ENCODE measurements at regions of chr1 and their contacts with region 1.

Region 1: DNA sequence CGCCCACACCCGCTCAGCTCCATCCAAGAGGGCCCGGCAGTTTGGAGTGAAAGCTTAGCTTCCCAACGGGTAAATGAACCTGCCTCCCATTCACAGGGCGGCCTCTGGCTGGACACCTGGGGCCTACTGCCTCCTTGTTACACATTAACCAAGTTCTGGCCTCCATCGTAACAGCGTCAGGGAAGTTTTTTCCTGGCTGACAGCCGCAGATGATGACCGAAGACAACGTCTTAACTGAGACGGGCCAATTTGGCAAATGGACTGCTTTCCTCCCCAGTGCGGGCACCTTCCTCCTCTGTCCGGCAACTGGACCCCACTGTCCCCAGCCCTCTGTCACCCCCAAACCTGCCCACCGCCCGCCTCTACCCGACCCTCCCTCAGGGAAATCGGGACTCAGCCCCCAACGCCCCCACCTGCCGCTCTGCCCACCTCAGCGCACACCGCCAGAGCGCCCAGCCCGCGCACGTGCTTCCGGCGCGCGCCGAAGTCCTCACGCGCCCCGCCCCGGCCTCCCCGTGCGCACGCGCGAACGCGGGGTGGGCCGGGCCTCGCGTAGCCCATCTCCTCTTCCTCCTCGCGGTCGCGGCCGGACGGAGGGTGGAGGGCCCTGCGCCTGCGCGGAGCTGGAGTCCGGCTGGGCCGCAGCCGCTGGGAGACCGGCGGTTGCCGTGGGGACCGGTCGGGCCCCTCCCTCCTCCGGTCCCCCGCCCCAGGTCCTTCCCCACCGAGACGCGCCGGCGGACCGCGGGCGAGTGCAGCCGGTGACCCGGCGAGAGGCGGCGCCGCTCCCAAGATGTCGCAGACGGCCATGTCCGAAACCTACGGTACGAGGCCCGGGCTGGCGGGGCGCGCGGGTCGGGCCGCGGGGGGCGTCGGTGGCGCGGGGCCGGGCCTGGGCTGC is at the start of gene RAB4A:
- DNase-seq: peak; percentile 38 to 90 (median 70)
- ATAC-seq: peak; percentile 87
- H3K4me3 ChIP-seq: peak within 1 kb of the TSS; percentile 80
- H3K4me3 Mint-ChIP-seq: peak within 1 kb of the TSS; percentile 99
- H3K27ac ChIP-seq: peak within 1 kb of the TSS in 1 of 2 donors; percentile 41
- H3K27ac Mint-ChIP-seq: peak within 1 kb of the TSS; percentile 77
- H3K4me1 ChIP-seq: peaks cover 34% of the 10 kb centered on the region
- H3K4me1 Mint-ChIP-seq: peaks cover 35% of the 10 kb centered on the region
- H3K27me3 ChIP-seq: no peaks in the 10 kb centered on the region
- H3K27me3 Mint-ChIP-seq: no peaks in the 10 kb centered on the region
- CTCF ChIP-seq: no peak
- total RNA-seq, gene RAB4A: 26.7 to 28.7 TPM

Region 2: DNA sequence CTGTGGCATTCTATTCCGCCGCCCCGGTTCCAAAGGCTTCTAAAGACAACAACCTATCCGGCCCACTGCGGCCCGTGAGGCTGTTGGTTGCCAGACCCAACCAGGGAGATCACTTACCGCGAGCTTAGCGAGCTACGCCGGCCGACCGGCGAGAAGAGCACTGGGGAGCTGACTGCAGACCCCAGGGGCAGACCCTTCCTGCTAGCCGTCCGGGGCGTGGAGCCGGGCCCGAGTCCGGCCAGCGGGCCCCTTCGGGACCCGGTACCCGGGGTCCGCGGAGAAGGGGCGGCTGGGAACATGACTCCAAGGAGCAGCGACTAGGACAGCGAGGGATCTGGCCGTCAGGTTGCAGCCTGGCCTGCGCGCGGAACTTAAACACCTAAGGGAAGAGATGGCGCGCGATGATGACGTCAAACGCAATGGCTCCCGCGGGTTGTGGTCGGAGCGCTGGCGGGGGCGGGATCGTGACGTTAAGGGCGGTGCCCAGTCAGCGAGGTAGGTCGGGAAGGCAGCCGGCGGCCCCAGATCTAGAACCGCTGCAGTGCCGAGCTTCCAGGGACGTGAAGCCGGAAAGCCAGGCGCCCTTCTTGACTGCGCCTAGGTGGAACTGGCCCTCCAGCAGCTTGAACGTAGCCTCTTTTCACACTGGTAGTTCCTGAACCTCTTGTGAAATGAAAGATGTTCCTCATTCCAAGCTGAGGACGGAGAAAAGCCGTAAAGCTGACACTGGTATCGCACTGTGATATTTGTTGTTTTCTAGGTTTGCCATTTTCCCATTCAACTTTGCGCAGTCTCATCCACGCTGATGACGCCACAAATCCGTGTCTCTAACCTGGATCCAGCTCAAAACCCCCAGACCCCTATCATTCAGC is 237.4 kb after region 1 on chr1 and contains the start of gene NUP133:
- CTCF ChIA-PET with region 1: interaction called, 4 read pairs
- POLR2A ChIA-PET with region 1: interaction called, 4 read pairs
- intact Hi-C with region 1: loop called in 1 of 2 experiments (anchors 5 kb)
- DNase-seq: peak; percentile 96 to 100 (median 98)
- ATAC-seq: peak; percentile 97
- H3K4me3 ChIP-seq: peak within 1 kb of the TSS; percentile 98
- H3K4me3 Mint-ChIP-seq: peak within 1 kb of the TSS; percentile 97
- H3K27ac ChIP-seq: peak within 1 kb of the TSS; percentile 90 to 93
- H3K27ac Mint-ChIP-seq: peak within 1 kb of the TSS; percentile 97
- H3K4me1 ChIP-seq: peaks cover 19% of the 10 kb centered on the region
- H3K4me1 Mint-ChIP-seq: peaks cover 33% of the 10 kb centered on the region
- H3K27me3 ChIP-seq: no peaks in the 10 kb centered on the region
- H3K27me3 Mint-ChIP-seq: no peaks in the 10 kb centered on the region
- CTCF ChIP-seq: no peak
- total RNA-seq, gene NUP133: 42.0 to 45.3 TPM